Activated B cell treated with CpG ODN at 0.5 μM for 24 hours (primary cell): ENCODE measurements at regions of chr15 and their contacts with region 1.

Region 1: DNA sequence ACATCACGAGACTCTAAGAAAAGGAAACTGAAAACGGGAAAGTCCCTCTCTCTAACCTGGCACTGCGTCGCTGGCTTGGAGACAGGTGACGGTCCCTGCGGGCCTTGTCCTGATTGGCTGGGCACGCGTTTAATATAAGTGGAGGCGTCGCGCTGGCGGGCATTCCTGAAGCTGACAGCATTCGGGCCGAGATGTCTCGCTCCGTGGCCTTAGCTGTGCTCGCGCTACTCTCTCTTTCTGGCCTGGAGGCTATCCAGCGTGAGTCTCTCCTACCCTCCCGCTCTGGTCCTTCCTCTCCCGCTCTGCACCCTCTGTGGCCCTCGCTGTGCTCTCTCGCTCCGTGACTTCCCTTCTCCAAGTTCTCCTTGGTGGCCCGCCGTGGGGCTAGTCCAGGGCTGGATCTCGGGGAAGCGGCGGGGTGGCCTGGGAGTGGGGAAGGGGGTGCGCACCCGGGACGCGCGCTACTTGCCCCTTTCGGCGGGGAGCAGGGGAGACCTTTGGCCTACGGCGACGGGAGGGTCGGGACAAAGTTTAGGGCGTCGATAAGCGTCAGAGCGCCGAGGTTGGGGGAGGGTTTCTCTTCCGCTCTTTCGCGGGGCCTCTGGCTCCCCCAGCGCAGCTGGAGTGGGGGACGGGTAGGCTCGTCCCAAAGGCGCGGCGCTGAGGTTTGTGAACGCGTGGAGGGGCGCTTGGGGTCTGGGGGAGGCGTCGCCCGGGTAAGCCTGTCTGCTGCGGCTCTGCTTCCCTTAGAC is at the start of gene B2M:
- DNase-seq: peak; percentile 92
- ATAC-seq: peak; percentile 74
- H3K4me3 Mint-ChIP-seq: peak within 1 kb of the TSS; percentile 99
- H3K27ac Mint-ChIP-seq: peak within 1 kb of the TSS; percentile 100
- H3K4me1 Mint-ChIP-seq: peaks cover 53% of the 10 kb centered on the region
- H3K27me3 Mint-ChIP-seq: no peaks in the 10 kb centered on the region
- CTCF ChIP-seq: no peak
- total RNA-seq, gene B2M: 3,396 and 3,707 TPM in 2 replicates

Region 2: DNA sequence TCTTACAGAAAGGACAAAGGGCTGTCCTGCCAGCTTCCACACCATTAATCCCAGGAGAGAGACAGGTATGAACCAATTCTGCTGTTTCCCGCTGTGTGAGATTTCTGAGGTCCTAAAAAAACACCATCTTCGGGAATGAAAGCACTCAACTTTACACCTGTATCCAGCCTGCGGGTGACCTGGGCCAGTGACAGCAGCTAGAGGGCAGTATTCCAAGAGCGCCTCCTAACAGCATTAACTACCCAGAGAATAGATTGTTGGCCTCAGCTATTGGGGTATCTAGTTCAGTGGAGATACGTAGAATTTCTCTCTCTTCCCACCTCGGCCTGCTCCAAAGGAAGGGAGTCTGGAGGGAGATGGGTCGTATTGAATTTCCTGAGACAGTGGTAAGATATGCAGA is 829.6 kb before region 1 on chr15:
- CTCF ChIA-PET with region 1: no interaction called
- POLR2A ChIA-PET with region 1: no interaction called
- intact Hi-C with region 1: no loop called
- DNase-seq: no peak
- ATAC-seq: no peak
- H3K4me3 Mint-ChIP-seq: no peak overlapping the region
- H3K27ac Mint-ChIP-seq: no peak overlapping the region
- H3K4me1 Mint-ChIP-seq: peaks cover 3% of the 10 kb centered on the region
- H3K27me3 Mint-ChIP-seq: no peaks in the 10 kb centered on the region
- CTCF ChIP-seq: no peak

Region 3: GRCh38 chr15:44536962-44537734 is 174.4 kb before region 1 on chr15 and contains the start of gene EIF3J:
- CTCF ChIA-PET with region 1: no interaction called
- POLR2A ChIA-PET with region 1: interaction called, 19 read pairs
- intact Hi-C with region 1: loop called (anchors 1 kb)
- DNase-seq: peak; percentile 90
- ATAC-seq: peak; percentile 89
- H3K4me3 Mint-ChIP-seq: peak within 1 kb of the TSS; percentile 92
- H3K27ac Mint-ChIP-seq: peak within 1 kb of the TSS; percentile 93
- H3K4me1 Mint-ChIP-seq: peaks cover 50% of the 10 kb centered on the region
- H3K27me3 Mint-ChIP-seq: no peaks in the 10 kb centered on the region
- CTCF ChIP-seq: no peak
- total RNA-seq, gene EIF3J: 78.9 and 88.4 TPM in 2 replicates

Region 4: GRCh38 chr15:44647637-44648036 is 63.9 kb before region 1 on chr15:
- CTCF ChIA-PET with region 1: no interaction called
- POLR2A ChIA-PET with region 1: interaction called, 13 read pairs
- intact Hi-C with region 1: no loop called
- DNase-seq: no peak
- ATAC-seq: no peak
- H3K4me3 Mint-ChIP-seq: no peak overlapping the region
- H3K27ac Mint-ChIP-seq: no peak overlapping the region
- H3K4me1 Mint-ChIP-seq: peaks cover 41% of the 10 kb centered on the region
- H3K27me3 Mint-ChIP-seq: no peaks in the 10 kb centered on the region
- CTCF ChIP-seq: no peak

Region 5: DNA sequence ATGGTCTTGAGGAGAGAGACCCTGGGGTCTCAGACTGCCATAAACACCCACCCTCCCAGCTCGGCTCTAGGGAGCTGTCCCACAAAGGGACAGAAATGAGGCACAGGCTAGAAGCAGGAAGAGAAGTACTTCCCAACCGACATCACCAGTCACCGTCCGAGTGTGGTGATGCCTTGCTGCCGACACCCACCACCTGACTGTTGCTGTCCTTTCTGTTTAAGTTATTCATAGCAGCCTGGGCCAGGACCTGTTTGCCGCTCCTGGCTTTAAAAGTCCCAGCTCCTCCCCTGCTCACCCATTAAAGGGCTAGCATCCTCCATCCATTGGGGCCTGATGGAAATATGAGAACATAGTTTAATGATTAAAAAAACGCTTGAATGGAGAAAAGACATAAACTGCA is 34.9 kb before region 1 on chr15:
- CTCF ChIA-PET with region 1: interaction called, 10 read pairs
- POLR2A ChIA-PET with region 1: interaction called, 136 read pairs
- intact Hi-C with region 1: no loop called
- DNase-seq: no peak
- ATAC-seq: peak; percentile 29
- H3K4me3 Mint-ChIP-seq: peak overlapping the region; percentile 32
- H3K27ac Mint-ChIP-seq: peak overlapping the region; percentile 83
- H3K4me1 Mint-ChIP-seq: peaks cover 78% of the 10 kb centered on the region
- H3K27me3 Mint-ChIP-seq: no peaks in the 10 kb centered on the region
- CTCF ChIP-seq: no peak

Region 6: DNA sequence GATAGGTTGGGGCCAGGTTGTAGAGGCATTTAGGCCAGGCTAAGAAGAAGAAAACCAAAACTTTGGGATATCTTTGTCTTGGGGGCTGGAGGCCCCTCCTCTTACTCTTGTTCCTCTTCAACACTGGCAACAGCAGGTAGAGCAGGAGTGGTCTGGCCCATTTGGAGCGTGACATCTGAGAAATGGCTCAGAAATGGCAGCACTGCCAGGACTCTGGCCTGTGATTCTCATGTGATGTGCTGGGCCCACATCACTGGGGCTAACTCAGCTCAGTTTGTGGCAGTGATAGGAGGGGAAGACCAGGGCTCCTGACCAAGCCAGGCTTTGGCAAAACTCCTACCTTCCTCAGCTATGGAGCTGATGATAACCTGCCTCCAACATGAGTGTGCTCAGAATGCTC is 18.9 kb before region 1 on chr15:
- CTCF ChIA-PET with region 1: no interaction called
- POLR2A ChIA-PET with region 1: interaction called, 136 read pairs
- intact Hi-C with region 1: no loop called
- DNase-seq: no peak
- ATAC-seq: no peak
- H3K4me3 Mint-ChIP-seq: no peak overlapping the region
- H3K27ac Mint-ChIP-seq: no peak overlapping the region
- H3K4me1 Mint-ChIP-seq: peaks cover 12% of the 10 kb centered on the region
- H3K27me3 Mint-ChIP-seq: no peaks in the 10 kb centered on the region
- CTCF ChIP-seq: no peak

Region 7: DNA sequence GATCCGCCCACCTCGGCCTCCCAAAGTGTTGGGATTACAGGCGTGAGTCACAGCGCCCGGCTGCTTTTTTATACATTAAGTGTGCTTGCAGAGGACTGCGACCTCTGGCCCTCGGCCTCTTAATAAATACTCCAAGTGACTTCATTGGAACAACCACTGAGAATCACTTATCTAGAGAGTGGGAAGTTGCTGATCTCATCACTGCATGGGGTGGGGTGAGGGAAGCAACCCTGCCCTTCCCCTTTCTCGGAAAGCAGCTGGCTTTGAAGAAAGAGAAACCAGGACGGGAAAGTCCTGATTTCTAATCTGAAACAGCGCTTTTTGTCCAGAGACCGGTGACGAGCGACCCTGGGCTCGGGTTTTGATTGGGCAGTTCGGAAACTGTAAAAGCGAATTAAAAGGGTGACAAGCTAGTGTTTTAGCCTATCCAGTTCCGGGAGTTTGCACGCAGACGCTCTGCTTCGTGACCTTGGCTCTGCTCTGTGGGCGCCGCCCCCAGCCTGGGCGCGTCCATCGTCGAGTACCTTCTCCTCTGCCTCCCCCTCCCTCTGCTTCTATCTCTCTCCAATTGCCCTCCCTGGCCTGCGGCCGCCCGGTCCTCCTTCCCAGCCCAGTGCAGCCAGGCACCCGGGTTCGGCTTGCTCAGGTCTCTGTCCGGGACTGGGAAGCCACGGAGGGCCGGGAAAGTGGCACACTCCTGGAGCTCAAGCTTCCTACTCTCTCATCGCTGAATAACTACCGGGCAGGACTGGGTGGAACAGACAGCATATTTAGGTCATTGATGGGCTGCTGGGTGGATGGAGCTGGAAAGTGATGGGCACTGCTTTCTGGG is 17.3 kb after region 1 on chr15:
- CTCF ChIA-PET with region 1: interaction called, 164 read pairs
- POLR2A ChIA-PET with region 1: interaction called, 2,387 read pairs
- intact Hi-C with region 1: loop called (anchors 1 kb)
- DNase-seq: peak; percentile 86
- ATAC-seq: peak; percentile 74
- H3K4me3 Mint-ChIP-seq: peak overlapping the region; percentile 99
- H3K27ac Mint-ChIP-seq: peak overlapping the region; percentile 100
- H3K4me1 Mint-ChIP-seq: peaks cover 75% of the 10 kb centered on the region
- H3K27me3 Mint-ChIP-seq: no peaks in the 10 kb centered on the region
- CTCF ChIP-seq: no peak

Region 8: DNA sequence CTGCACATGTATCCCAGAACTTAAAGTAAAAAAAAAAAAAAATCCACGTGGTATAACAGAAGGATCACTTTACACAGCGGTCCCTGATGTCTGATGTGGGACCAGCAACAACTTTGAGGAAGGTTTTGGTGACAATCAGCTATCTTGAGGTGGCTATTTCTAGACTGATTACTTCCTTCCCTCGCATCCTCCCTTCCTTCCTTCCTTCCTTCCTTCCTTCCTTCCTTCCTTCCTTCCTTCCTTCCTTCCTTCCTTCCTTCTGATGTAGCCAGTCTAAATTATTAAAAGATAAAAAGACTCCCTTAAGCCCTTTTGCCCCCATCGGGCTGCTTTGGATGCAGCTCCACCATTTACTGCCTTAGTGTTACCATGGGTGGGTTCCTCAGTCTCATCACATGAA is 326.4 kb after region 1 on chr15:
- CTCF ChIA-PET with region 1: no interaction called
- POLR2A ChIA-PET with region 1: no interaction called
- intact Hi-C with region 1: loop called (anchors 5 kb)
- DNase-seq: no peak
- ATAC-seq: no peak
- H3K4me3 Mint-ChIP-seq: no peak overlapping the region
- H3K27ac Mint-ChIP-seq: peak overlapping the region; percentile 31
- H3K4me1 Mint-ChIP-seq: peaks cover 35% of the 10 kb centered on the region
- H3K27me3 Mint-ChIP-seq: no peaks in the 10 kb centered on the region
- CTCF ChIP-seq: no peak